ENCODE measurements at regions of chr1 and their contacts with region 1.

Region 1: GRCh38 chr1:54488779-54489626 is 59.0 kb upstream of the ACOT11 start:
- DNase-seq: peak; percentile 74
- H3K4me3 Mint-ChIP-seq: peak overlapping the region; percentile 77
- H3K27ac Mint-ChIP-seq: peak overlapping the region; percentile 93
- H3K4me1 Mint-ChIP-seq: peaks cover 5% of the 10 kb centered on the region
- H3K27me3 Mint-ChIP-seq: no peaks in the 10 kb centered on the region
- CTCF ChIP-seq: peak; percentile 86

Region 2: DNA sequence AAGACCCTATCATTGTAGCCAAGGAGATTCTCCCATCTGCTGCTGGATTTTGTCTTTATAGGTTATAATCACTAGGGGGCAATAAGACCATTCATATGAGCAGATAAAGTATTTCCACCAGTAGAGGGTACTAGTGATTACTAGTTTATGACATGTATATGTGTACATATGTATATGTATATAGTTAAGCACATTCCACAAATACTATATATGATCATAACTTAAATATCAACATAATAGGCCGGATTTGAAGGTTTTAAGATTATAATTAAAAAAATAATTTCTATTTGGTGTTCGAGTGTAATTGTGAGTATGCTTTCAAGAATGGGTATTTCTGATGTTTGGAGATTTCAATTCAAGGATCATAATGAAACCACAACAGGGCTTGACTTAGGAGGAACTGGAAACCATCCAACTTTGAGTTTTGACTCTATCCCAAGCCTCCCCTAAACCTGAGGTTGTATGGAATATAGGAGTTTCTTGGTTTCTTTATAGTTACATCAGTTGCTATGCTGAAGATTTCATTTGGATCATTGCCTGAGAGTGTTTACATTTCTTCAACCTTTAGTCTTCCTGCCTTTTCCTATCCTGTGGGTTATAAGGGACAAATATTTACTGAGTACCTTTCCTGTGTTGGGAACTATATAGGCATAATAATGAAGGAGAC is 418.7 kb before region 1 on chr1:
- CTCF ChIA-PET with region 1: interaction called, 18 read pairs
- POLR2A ChIA-PET with region 1: no interaction called
- intact Hi-C with region 1: loop called (anchors 1 kb)
- DNase-seq: peak; percentile 51
- H3K4me3 Mint-ChIP-seq: no peak overlapping the region
- H3K27ac Mint-ChIP-seq: no peak overlapping the region
- H3K4me1 Mint-ChIP-seq: no peaks in the 10 kb centered on the region
- H3K27me3 Mint-ChIP-seq: no peaks in the 10 kb centered on the region
- CTCF ChIP-seq: peak; percentile 75

Region 3: DNA sequence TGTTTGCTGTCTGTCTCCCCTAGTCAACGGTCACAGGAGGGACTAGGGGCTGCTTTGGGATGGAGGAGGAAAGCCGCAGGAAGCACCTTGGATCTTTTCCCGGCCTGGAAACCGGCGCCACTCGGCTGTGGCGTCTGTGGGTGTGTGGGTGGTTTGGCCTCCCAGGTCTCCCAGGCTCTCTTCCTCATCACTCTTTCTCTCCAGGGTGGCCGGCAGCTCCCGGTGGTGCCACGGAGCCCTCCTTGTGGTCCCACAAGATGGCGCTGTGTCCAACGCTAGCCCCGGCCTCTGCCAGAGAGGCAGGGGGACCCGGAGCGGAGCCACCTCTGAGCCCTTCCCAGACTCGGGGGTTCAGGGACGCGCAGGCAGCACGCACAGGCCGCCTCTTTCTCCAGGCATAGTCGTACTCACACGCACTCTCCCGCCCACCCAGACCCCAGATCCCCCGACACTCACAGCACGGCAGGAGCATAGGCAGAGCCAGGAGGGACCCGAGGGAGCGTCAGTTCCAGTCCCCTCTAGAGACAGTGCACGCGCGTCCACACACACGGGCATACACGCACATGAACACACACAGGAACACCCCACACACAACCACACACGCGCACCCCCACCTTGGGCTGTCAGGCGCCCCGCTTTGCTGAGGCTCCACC is 367.4 kb before region 1 on chr1:
- CTCF ChIA-PET with region 1: interaction called, 9 read pairs
- POLR2A ChIA-PET with region 1: interaction called, 3 read pairs
- intact Hi-C with region 1: loop called (anchors 2 kb)
- DNase-seq: peak; percentile 65
- H3K4me3 Mint-ChIP-seq: no peak overlapping the region
- H3K27ac Mint-ChIP-seq: no peak overlapping the region
- H3K4me1 Mint-ChIP-seq: no peaks in the 10 kb centered on the region
- H3K27me3 Mint-ChIP-seq: no peaks in the 10 kb centered on the region
- CTCF ChIP-seq: peak; percentile 58

Region 4: DNA sequence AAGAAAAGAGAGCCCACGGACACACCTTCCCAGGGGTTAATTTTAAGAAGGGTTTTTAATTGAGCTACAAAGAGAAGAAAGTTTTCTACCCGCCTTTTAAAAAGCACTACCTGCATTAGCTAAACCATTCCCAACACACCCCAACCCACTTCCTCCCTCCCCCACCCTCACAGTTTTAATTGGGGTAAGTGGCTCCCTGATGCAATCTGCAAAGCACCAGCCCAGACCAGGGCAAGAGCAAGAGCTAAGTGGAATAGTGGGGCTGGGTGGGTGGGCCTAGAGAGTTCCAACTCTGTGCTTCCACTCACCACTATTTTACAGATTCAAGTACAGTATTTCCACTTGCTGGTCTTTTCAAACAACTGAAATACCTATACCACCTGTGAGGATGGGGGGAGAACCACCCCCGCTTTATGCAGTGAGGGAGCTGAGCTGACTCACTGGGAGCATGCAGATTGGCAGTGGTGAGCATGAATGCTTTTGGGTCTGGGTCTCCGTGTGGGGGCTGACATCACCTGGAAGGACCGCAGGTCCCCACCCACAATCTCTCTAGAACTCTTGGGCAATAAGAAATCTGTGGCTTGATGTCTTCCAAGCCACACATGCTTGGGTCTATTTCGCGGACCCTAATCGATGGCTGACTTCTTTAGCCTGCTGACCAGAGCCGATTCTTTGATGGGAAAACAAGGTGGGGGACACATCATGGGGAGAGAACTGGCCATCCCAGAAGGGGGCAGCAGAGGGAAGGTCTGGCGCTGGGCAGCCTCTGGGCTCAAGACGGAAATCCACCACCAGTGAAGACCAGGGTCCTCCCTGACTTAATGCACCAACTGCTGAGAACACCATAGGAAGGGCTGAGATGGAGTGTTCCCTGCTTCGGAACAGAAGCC is 178.3 kb before region 1 on chr1:
- CTCF ChIA-PET with region 1: no interaction called
- POLR2A ChIA-PET with region 1: no interaction called
- intact Hi-C with region 1: loop called (anchors 1 kb)
- DNase-seq: peak; percentile 41
- H3K4me3 Mint-ChIP-seq: no peak overlapping the region
- H3K27ac Mint-ChIP-seq: no peak overlapping the region
- H3K4me1 Mint-ChIP-seq: no peaks in the 10 kb centered on the region
- H3K27me3 Mint-ChIP-seq: no peaks in the 10 kb centered on the region
- CTCF ChIP-seq: peak; percentile 15

Region 5: GRCh38 chr1:54337928-54338327 is 151.1 kb before region 1 on chr1:
- CTCF ChIA-PET with region 1: no interaction called
- POLR2A ChIA-PET with region 1: no interaction called
- intact Hi-C with region 1: no loop called
- DNase-seq: no peak
- H3K4me3 Mint-ChIP-seq: no peak overlapping the region
- H3K27ac Mint-ChIP-seq: no peak overlapping the region
- H3K4me1 Mint-ChIP-seq: peaks cover 8% of the 10 kb centered on the region
- H3K27me3 Mint-ChIP-seq: no peaks in the 10 kb centered on the region
- CTCF ChIP-seq: no peak

Region 6: DNA sequence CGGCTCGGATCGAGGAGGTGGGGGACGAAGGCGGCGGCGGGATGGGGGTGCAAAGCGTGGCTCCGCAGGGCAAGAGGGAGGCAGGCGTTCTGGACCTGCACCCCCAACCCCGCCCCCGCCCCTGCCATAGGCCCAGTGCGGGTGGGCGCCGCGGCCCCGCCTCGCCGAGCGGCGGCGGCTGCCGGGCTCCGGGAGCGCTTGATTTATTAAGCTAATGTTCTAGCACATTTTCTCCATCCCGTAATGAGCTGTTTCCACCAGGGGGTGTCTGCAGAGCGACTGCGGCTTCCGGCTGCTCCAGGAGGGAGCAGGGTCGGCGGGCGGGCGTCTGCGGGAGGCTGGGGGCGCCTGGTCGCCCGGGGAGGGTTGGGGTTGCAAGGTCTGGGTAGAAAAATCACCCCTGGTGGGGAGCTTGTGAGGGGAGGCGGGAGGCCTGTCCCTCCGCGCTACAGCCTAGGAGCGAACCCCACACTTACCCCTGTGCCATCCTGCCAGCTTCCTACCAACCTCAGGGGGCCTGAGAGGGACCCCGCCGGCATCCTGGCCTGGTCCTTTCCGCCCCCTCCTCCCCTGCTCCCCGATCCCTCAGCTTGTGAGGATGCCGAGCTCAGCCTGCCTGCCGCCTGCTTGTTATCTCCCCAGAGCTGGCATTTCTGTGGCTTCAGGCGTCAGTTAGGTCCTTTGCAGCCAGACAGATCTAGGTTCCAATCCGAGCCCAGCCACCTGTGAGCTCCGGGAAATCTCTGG is 10.5 kb after region 1 on chr1:
- CTCF ChIA-PET with region 1: interaction called, 4 read pairs
- POLR2A ChIA-PET with region 1: interaction called, 12 read pairs
- intact Hi-C with region 1: no loop called
- DNase-seq: peak; percentile 23
- H3K4me3 Mint-ChIP-seq: peak overlapping the region; percentile 59
- H3K27ac Mint-ChIP-seq: no peak overlapping the region
- H3K4me1 Mint-ChIP-seq: no peaks in the 10 kb centered on the region
- H3K27me3 Mint-ChIP-seq: no peaks in the 10 kb centered on the region
- CTCF ChIP-seq: peak; percentile 16